Mucosa of descending colon (tissue), 3 donors: ENCODE measurements at regions of chr3 and their contacts with region 1.

Region 1: GRCh38 chr3:17894434-17895060 is 152.1 kb upstream of the TBC1D5 start:
- DNase-seq: peak in 2 of 3 donors; percentile 67 to 77
- ATAC-seq: peak; percentile 71
- H3K4me3 ChIP-seq: no peak overlapping the region
- H3K4me1 ChIP-seq: no peaks in the 10 kb centered on the region
- CTCF ChIP-seq: no peak

Region 2: GRCh38 chr3:18295171-18295920 is 400.8 kb after region 1 on chr3:
- intact Hi-C with region 1: loop called in 1 of 2 experiments (anchors 10 kb)
- DNase-seq: peak in 2 of 3 donors; percentile 38 to 43
- ATAC-seq: peak; percentile 97
- H3K4me3 ChIP-seq: no peak overlapping the region
- H3K4me1 ChIP-seq: no peaks in the 10 kb centered on the region
- CTCF ChIP-seq: peak; percentile 26

Region 3: DNA sequence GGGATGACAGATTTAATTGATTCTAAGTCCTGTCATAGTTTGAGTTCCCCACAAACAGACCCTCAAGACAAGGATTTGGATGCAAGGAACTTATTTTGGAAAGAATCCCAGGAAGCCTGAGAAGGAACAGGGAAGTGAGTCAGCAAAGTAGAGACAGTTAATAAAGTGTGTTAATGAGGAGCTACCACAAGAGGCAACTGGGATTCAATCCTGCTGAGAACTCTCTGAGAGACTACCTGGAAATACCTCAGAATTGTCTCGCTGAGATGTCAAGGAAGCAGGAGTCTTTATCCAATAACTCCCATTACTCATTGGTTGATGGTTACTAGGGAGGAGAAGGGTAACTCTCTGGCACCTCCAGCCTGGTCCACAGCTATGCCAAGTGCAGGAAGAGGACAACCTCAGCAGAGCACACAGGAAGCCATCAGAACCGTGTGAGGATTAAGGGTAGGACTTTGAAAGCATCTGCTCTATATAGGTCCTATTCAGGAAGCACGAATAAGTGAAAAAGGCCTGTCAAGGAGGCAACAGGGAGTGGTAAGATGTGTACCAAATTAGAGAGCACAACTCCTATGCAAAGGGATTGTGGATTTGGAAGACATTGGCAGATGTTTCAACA is 942.7 kb after region 1 on chr3:
- intact Hi-C with region 1: no loop called
- DNase-seq: no peak
- ATAC-seq: no peak
- H3K4me3 ChIP-seq: no peak overlapping the region
- H3K4me1 ChIP-seq: no peaks in the 10 kb centered on the region
- CTCF ChIP-seq: no peak